Activated CD8-positive, alpha-beta T cell treated with anti-CD3 and anti-CD28 coated beads for 36 hours (primary cell): ENCODE measurements at regions of chr16 and their contacts with region 1.

Region 1: DNA sequence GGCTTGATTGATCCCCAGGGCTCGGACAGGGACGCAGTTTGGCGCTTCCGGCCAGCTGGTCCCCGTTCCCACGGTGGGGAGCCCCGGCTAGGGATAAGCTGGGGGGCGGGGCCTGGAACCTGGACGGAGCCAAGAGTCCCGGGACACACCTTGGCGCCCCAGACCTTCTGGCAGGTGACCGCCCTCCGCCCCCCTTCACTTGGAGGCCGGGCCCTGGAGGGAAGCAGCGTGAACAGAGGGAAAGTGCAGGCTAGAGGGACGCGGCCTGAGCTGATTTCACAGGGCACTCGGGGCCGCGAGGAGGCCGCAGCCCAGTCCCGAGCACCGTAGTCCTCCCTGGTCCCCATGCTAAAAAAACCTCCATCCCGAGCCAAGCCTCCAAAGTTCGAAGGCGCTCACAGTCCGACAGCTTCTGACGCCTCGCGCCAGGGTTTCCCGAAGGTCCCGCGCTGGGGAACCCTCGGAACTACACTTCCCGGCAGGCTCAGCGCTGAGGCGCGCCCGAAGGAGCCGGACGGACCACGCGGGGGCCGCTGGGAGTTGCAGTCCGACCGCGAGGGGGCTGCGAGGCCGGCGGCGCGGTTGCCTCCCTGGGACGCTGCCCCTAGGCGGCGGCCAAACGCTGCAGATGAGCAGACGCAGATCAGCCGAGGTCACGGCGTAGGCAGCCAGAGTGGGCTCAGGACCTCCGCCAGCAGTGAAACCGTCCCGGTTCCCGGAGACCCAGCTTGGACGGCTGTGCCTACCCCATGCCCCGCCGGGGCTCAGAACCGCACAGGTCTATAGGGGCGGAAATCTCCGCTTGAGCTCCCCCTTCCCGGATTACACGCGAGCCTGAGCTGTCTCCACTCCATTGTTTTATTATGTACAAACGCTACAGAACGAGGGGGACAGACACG is at the start of gene TBX6:
- DNase-seq: peak; percentile 95
- ATAC-seq: peak; percentile 83
- H3K4me3 Mint-ChIP-seq: peak within 1 kb of the TSS; percentile 90
- H3K27ac Mint-ChIP-seq: peak within 1 kb of the TSS; percentile 98
- H3K4me1 Mint-ChIP-seq: peaks cover 47% of the 10 kb centered on the region
- H3K27me3 Mint-ChIP-seq: no peaks in the 10 kb centered on the region
- CTCF ChIP-seq: peak; percentile 73
- total RNA-seq, gene TBX6: 2.5 TPM

Region 2: DNA sequence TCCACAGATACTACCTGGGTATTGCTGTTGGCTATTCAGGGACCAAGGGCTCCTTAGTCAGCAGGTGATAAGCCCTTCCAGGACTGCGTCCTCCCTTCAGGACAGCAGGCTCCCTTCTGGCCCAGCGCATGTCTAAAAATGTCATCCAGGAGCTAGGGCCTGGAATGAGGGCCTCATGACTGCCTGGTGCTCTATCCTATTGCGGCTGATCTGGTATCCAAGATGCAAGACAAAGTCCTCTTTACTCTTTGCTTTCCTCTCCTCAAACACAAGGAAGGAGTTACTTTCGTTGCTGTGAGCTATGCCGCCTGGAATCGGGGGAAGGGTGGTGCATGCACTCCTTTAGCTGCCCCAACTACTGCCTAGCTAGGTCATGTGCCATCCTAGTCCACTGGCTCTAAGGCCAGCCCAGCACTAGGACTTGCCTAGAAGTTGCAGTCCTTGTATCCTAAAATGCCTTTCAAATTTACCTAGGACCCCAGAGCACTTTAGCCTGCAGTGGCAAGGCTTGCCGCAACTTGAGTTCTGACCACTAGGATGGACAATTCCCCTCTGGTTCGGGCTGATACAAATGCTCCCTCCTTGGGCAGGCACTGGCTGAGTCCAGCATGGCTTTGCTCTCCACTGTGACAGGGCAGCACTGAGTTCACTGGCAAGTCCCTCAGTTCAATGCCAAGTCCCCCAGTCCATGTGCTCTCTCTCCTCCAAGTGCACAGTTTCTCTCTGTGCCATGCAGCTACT is 139.9 kb before region 1 on chr16:
- CTCF ChIA-PET with region 1: no interaction called
- POLR2A ChIA-PET with region 1: no interaction called
- intact Hi-C with region 1: no loop called
- DNase-seq: no peak
- ATAC-seq: no peak
- H3K4me3 Mint-ChIP-seq: no peak overlapping the region
- H3K27ac Mint-ChIP-seq: no peak overlapping the region
- H3K4me1 Mint-ChIP-seq: no peaks in the 10 kb centered on the region
- H3K27me3 Mint-ChIP-seq: peaks cover 2% of the 10 kb centered on the region
- CTCF ChIP-seq: no peak

Region 3: DNA sequence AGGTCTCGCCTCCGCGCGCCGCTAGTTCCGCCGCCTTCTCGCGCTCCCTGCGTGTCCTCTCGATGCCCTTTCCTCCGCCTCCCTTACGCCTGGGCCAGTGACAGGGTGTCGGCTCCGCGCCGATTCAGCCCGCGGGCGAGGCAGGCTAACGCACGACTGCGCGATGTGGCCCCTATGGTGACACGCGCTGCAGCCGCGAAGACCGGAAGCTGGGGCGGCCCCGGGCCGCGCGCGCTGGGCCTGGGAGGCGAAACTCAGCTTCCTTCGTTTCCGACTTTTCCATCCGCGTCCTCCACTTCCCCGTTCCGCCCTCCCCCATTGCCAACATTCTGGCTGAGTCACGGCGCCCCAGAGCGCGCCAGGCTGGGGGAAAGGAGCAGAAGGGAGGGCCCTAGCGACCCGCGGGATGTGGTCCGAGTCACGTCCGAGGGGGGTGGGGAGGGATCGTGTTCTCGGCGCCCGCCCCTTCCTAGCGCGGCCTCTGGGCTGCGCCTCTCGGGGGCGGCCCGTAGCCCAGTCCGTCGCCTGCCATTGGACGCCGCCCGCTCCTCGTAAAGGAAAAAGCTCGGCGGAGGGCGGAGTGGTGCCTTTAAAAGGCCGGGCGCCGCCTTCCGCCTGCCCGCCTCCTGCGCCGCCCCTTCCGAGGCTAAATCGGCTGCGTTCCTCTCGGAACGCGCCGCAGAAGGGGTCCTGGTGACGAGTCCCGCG is 26.4 kb before region 1 on chr16 and contains the start of gene ALDOA:
- CTCF ChIA-PET with region 1: interaction called, 12 read pairs
- POLR2A ChIA-PET with region 1: interaction called, 41 read pairs
- intact Hi-C with region 1: no loop called
- DNase-seq: peak; percentile 99
- ATAC-seq: peak; percentile 87
- H3K4me3 Mint-ChIP-seq: peak within 1 kb of the TSS; percentile 91
- H3K27ac Mint-ChIP-seq: peak within 1 kb of the TSS; percentile 100
- H3K4me1 Mint-ChIP-seq: peaks cover 30% of the 10 kb centered on the region
- H3K27me3 Mint-ChIP-seq: no peaks in the 10 kb centered on the region
- CTCF ChIP-seq: no peak
- total RNA-seq, gene ALDOA: 3,042 to 3,081 TPM

Region 4: DNA sequence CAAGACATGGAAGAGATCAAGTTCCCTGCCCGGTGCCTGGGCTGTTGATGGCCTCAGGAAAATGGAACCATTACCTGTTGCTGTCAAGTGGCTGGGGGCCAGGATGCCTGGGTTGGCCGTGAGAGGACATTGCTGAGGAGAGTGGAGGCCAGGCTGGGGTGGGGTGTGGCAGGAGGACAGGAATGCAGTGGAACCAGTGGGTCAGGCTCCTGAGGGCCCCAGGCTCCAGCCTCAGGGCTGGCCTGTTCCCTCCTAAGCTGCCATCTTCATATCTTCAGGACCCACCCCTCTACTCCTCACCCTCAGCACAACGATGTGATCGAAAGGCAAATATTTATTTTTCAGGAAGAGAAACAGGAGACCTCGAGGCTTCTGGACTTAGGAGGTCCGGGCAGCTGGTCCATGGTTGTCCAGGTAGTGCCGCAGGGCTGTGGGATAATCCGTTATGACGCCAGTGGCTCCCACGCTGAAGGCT is 12.8 kb after region 1 on chr16:
- CTCF ChIA-PET with region 1: interaction called, 36 read pairs
- POLR2A ChIA-PET with region 1: interaction called, 10 read pairs
- intact Hi-C with region 1: no loop called
- DNase-seq: no peak
- ATAC-seq: no peak
- H3K4me3 Mint-ChIP-seq: no peak overlapping the region
- H3K27ac Mint-ChIP-seq: no peak overlapping the region
- H3K4me1 Mint-ChIP-seq: no peaks in the 10 kb centered on the region
- H3K27me3 Mint-ChIP-seq: no peaks in the 10 kb centered on the region
- CTCF ChIP-seq: no peak

Region 5: GRCh38 chr16:30186782-30187555 is 95.2 kb after region 1 on chr16:
- CTCF ChIA-PET with region 1: interaction called, 19 read pairs
- POLR2A ChIA-PET with region 1: interaction called, 47 read pairs
- intact Hi-C with region 1: no loop called
- DNase-seq: peak; percentile 95
- ATAC-seq: peak; percentile 10
- H3K4me3 Mint-ChIP-seq: peak overlapping the region; percentile 100
- H3K27ac Mint-ChIP-seq: peak overlapping the region; percentile 100
- H3K4me1 Mint-ChIP-seq: peaks cover 20% of the 10 kb centered on the region
- H3K27me3 Mint-ChIP-seq: no peaks in the 10 kb centered on the region
- CTCF ChIP-seq: peak; percentile 97

Region 6: DNA sequence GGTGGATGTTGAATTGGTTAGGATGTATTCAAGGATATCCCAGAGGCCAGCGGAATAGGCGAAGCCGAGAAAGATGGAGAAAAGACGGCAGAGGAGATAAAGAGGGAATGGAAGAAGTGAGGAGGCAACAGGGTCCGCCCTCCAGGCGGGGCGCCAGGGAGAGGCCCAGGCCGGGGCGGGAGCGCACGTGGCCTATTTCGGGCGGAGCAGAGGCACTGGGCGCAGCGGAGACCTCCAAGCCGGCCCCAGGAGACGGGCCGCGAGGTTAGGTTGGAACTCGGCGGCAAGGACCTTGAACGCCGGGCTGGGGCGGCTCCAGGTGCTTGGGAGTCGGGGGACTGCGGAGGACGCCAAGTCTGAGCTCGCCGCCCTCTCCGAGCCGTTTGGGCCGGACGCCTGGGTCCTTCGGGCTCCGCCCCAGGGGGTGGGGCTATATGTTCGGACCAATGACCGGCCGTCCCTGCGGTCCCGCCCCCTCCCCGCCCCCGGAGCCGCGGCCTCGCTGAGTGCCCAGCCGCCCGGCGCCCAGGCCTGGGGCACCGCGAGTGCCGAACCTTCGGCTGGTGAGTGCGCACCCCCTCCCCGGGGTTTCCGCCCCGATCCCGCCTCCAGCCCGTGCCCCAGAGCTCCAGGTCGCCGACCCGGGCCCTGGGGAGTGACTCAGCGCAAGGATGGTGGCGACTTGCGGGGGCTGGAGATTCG is 315.5 kb after region 1 on chr16 and contains the start of gene ZNF771:
- CTCF ChIA-PET with region 1: interaction called, 10 read pairs
- POLR2A ChIA-PET with region 1: interaction called, 3 read pairs
- intact Hi-C with region 1: no loop called
- DNase-seq: peak; percentile 95
- ATAC-seq: peak; percentile 89
- H3K4me3 Mint-ChIP-seq: peak within 1 kb of the TSS; percentile 93
- H3K27ac Mint-ChIP-seq: peak within 1 kb of the TSS; percentile 98
- H3K4me1 Mint-ChIP-seq: peaks cover 28% of the 10 kb centered on the region
- H3K27me3 Mint-ChIP-seq: no peaks in the 10 kb centered on the region
- CTCF ChIP-seq: no peak
- total RNA-seq, gene ZNF771: 5.4 to 6.6 TPM